Activated naive CD4-positive, alpha-beta T cell treated with anti-CD3 and anti-CD28 coated beads for 36 hours (primary cell): ENCODE measurements at regions of chr7 and their contacts with region 1.

Region 1: GRCh38 chr7:48109848-48110663 is 21.0 kb downstream of the UPP1 start:
- DNase-seq: peak; percentile 96
- H3K4me3 Mint-ChIP-seq: no peak overlapping the region
- H3K27ac Mint-ChIP-seq: no peak overlapping the region
- H3K4me1 Mint-ChIP-seq: peaks cover 9% of the 10 kb centered on the region
- H3K27me3 Mint-ChIP-seq: no peaks in the 10 kb centered on the region

Region 2: GRCh38 chr7:47873762-47874161 is 236.3 kb before region 1 on chr7:
- CTCF ChIA-PET with region 1: no interaction called
- intact Hi-C with region 1: loop called (anchors 10 kb)
- DNase-seq: no peak
- H3K4me3 Mint-ChIP-seq: no peak overlapping the region
- H3K27ac Mint-ChIP-seq: no peak overlapping the region
- H3K4me1 Mint-ChIP-seq: peaks cover 9% of the 10 kb centered on the region
- H3K27me3 Mint-ChIP-seq: no peaks in the 10 kb centered on the region

Region 3: GRCh38 chr7:47968847-47969774 is 140.9 kb before region 1 on chr7:
- CTCF ChIA-PET with region 1: interaction called, 14 read pairs
- intact Hi-C with region 1: no loop called
- DNase-seq: peak; percentile 62
- H3K4me3 Mint-ChIP-seq: no peak overlapping the region
- H3K27ac Mint-ChIP-seq: peak overlapping the region; percentile 53
- H3K4me1 Mint-ChIP-seq: peaks cover 37% of the 10 kb centered on the region
- H3K27me3 Mint-ChIP-seq: no peaks in the 10 kb centered on the region

Region 4: DNA sequence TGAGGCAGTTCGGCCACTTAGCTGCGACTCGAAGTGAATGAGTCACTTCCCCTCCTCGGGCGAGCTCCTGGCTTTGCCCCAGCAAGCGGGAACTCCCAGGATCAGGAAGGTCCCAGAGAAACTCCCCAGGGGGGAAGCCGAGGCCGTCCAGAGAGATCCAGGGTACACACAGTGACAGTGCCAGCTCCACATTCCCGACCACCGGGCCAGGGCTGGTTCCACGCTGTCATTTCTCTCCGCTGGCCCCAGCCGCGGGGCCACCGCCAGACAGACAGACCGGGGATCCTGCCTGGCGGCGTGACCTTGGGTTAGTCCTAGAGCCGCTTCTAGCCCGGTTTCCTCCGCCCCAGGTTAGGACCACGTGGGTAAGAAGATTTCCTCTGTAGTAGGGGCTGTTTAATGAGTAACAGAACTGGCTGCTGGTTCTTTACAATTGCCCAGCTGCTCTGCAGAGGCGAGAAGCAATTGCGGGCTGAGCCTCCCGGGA is 21.5 kb before region 1 on chr7:
- CTCF ChIA-PET with region 1: interaction called, 15 read pairs
- intact Hi-C with region 1: no loop called
- DNase-seq: no peak
- H3K4me3 Mint-ChIP-seq: peak overlapping the region; percentile 84
- H3K27ac Mint-ChIP-seq: peak overlapping the region; percentile 92
- H3K4me1 Mint-ChIP-seq: peaks cover 75% of the 10 kb centered on the region
- H3K27me3 Mint-ChIP-seq: no peaks in the 10 kb centered on the region

Region 5: GRCh38 chr7:48154792-48155413 is 44.8 kb after region 1 on chr7:
- CTCF ChIA-PET with region 1: interaction called, 3 read pairs
- intact Hi-C with region 1: loop called (anchors 2 kb)
- DNase-seq: peak; percentile 55
- H3K4me3 Mint-ChIP-seq: no peak overlapping the region
- H3K27ac Mint-ChIP-seq: no peak overlapping the region
- H3K4me1 Mint-ChIP-seq: no peaks in the 10 kb centered on the region
- H3K27me3 Mint-ChIP-seq: peaks cover 21% of the 10 kb centered on the region

Region 6: DNA sequence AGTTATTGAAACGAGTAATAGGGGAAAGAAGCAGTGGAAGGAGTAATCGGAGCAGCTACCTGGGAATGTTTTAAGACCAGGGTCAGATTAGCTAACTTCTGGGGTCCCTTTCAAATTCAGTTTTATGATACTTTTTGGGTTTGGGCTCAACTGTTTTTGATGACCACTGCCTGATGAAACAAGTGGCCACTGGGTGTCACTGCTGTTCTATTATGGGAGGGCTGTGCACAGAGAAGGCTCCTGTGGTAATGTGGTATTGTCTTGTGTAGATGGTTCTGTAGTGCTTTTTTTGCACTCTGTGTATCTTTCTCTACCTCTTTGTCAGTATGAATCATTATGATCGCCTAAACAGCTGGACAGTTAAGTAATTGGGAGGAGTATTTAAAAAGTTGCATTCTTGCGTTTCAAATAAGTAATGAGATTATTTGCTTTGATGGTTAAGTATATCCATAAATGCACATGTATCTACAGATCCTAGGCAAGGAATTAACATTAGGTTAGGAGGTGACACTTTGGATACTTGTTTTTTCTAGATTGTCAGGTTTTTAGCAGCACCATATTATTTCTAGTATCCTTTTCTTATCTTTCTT is 189.6 kb after region 1 on chr7:
- CTCF ChIA-PET with region 1: no interaction called
- intact Hi-C with region 1: no loop called
- DNase-seq: peak; percentile 75
- H3K4me3 Mint-ChIP-seq: no peak overlapping the region
- H3K27ac Mint-ChIP-seq: no peak overlapping the region
- H3K4me1 Mint-ChIP-seq: peaks cover 4% of the 10 kb centered on the region
- H3K27me3 Mint-ChIP-seq: peaks cover 8% of the 10 kb centered on the region